Psoas muscle (tissue), 8 donors: ENCODE measurements at regions of chr16 and their contacts with region 1.

Region 1: DNA sequence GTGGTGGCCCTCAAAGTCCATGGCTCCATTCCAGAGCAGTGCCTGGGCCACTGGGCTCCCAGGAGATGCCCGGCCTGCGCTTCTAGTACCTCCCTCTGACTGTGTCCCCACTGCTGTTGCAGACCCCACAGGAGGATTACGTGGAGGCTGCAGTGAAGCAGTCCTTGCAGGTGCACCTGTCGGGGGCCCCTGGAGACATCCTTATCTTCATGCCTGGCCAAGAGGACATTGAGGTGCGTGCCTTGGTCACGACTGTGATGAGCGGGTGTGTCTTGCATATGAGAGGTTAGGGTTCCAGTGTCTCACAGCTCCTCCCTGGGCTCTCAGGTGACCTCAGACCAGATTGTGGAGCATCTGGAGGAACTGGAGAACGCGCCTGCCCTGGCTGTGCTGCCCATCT is 11.3 kb downstream of the DHX38 start:
- DNase-seq: no peak
- ATAC-seq: no peak
- H3K4me3 ChIP-seq: no peak overlapping the region
- H3K27ac ChIP-seq: no peak overlapping the region
- H3K4me1 ChIP-seq: no peaks in the 10 kb centered on the region
- H3K27me3 ChIP-seq: no peaks in the 10 kb centered on the region
- CTCF ChIP-seq: no peak

Region 2: DNA sequence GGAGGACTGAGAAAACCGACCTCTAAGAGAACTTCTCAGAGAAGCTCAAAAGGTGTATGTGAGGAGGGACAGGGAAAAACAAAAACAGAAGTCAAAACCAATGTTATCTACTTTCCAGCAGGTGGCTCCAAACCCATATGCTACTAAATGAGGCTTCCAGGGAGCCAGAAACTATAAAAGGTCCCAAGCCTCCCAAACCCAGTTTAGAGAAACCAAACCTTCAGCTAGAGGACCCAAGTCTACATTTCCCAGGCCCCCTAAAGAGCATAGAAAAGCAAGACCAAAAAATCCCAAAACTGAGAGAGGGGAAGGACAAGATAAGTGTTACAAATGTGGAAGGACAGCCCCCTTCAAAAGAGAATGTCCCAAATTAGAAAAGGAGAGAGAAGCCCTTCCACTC is 38.2 kb before region 1 on chr16:
- intact Hi-C with region 1: loop called in 1 of 2 experiments (anchors 5 kb)
- DNase-seq: no peak
- ATAC-seq: peak in 3 of 4 donors; percentile 48 to 78 (median 73)
- H3K4me3 ChIP-seq: no peak overlapping the region
- H3K27ac ChIP-seq: no peak overlapping the region
- H3K4me1 ChIP-seq: no peaks in the 10 kb centered on the region
- H3K27me3 ChIP-seq: no peaks in the 10 kb centered on the region
- CTCF ChIP-seq: peak; percentile 53

Region 3: DNA sequence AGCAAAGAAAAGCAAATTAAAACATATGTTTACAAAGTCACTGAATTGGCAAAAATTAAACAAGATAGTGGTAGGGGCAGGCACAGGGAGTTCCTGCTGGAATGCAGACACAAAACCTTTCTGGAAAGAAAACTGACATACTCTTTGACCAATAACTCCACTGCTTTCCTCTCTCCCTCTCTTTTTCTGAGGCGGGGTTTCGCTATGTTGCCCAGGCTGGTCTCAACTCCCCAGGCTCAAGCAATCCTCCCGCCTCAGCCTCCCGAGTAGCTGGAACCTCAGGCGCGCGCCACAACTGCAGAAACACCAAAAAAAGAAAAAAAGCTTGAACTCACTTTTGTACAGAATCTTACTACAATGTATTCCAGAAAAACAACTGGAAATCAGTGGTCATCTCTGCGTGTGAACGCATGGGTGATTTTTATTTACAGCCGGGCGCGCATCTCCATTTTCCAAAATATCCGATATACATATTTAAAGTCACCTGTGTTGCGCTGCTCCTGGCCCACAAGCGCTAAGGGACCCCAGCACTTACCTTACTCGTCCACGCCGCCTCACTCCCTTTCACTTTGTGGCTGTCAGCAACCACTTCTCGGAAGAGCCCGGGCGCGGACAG is 12.0 kb before region 1 on chr16:
- intact Hi-C with region 1: no loop called
- DNase-seq: no peak
- ATAC-seq: peak; percentile 44 to 62 (median 48)
- H3K4me3 ChIP-seq: peak overlapping the region; percentile 89
- H3K27ac ChIP-seq: peak overlapping the region; percentile 86
- H3K4me1 ChIP-seq: peaks cover 21% of the 10 kb centered on the region
- H3K27me3 ChIP-seq: no peaks in the 10 kb centered on the region
- CTCF ChIP-seq: no peak

Region 4: DNA sequence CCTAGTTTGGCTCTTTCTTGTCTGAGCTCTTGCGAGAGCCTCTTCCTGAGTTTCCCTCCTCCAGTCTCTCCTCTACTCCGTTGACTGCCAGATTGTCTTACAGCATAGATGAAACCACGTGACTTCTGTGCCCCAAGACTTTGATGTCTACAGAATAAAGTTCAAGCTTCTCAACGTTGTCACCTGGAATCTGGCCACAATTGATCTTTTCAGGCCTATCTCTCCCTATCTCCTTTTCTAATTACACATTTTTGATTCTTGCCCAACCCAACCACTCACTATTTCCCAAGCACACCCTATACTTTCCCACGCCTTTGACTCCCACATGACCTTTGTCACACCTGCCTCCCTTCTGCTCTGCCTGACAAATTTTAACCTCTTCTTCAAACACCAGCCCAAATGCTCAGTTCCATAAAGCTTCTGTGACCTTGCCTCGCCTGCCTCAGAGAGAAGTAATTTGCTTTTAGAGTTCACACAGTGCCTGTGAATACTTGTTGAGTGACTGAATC is 119.4 kb after region 1 on chr16:
- intact Hi-C with region 1: no loop called
- DNase-seq: no peak
- ATAC-seq: no peak
- H3K4me3 ChIP-seq: no peak overlapping the region
- H3K27ac ChIP-seq: no peak overlapping the region
- H3K4me1 ChIP-seq: no peaks in the 10 kb centered on the region
- H3K27me3 ChIP-seq: no peaks in the 10 kb centered on the region
- CTCF ChIP-seq: no peak